SK-N-SH (cell line): ENCODE measurements at regions of chr16 and their contacts with region 1.

Region 1: GRCh38 chr16:84952335-84953189 is 58.8 kb downstream of the ZDHHC7 start:
- DNase-seq: peak; percentile 85
- H3K4me3 ChIP-seq: peak overlapping the region in 1 of 2 experiments; percentile 32; a peak in 1 of 4 replicates
- H3K27ac ChIP-seq: peak overlapping the region; percentile 22 to 84; a peak in 3 of 4 replicates
- H3K4me1 ChIP-seq: peaks cover 4 to 14% of the 10 kb centered on the region in 2 experiments; a peak in 2 of 4 replicates
- H3K27me3 ChIP-seq: no peaks in the 10 kb centered on the region
- CTCF ChIP-seq: peak; percentile 88
- EP300 ChIP-seq: peak in 1 of 2 experiments; percentile 71; a peak in 2 of 4 replicates
- RAD21 ChIP-seq: peak; percentile 82

Region 2: DNA sequence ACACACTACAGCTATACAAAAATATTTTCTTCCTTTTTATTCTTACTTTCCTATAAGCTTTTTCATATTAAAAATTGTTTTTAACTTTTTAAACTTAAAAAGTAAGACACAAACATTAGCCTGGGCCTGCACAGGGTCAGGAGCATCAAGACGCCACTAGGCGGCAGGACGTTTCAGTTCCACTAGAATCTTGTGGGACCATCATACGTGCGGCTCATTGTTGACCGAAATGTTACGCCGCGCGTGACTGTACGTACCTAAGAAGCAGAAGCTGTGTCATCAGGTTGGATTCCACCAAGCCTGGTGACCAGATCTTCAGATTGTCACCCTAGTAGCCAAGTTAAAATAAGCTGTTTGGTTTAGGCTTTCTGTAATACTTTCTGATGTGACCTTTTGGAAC is 205.7 kb before region 1 on chr16:
- CTCF ChIA-PET with region 1: interaction called, 179 read pairs
- POLR2A ChIA-PET with region 1: no interaction called
- DNase-seq: no peak
- H3K4me3 ChIP-seq: no peak overlapping the region; a peak in 1 of 4 replicates
- H3K27ac ChIP-seq: no peak overlapping the region
- H3K4me1 ChIP-seq: peaks cover 0 to 4% of the 10 kb centered on the region in 2 experiments; a peak in 2 of 4 replicates
- H3K27me3 ChIP-seq: no peaks in the 10 kb centered on the region
- CTCF ChIP-seq: peak; percentile 49
- EP300 ChIP-seq: no peak
- RAD21 ChIP-seq: no peak

Region 3: GRCh38 chr16:84765616-84766580 is 186.7 kb before region 1 on chr16:
- CTCF ChIA-PET with region 1: interaction called, 179 read pairs
- POLR2A ChIA-PET with region 1: interaction called, 7 read pairs
- DNase-seq: no peak
- H3K4me3 ChIP-seq: no peak overlapping the region
- H3K27ac ChIP-seq: no peak overlapping the region
- H3K4me1 ChIP-seq: peaks cover 0 to 13% of the 10 kb centered on the region in 2 experiments; a peak in 2 of 4 replicates
- H3K27me3 ChIP-seq: no peaks in the 10 kb centered on the region
- CTCF ChIP-seq: no peak
- EP300 ChIP-seq: no peak
- RAD21 ChIP-seq: no peak

Region 4: GRCh38 chr16:84785843-84786581 is 166.6 kb before region 1 on chr16:
- CTCF ChIA-PET with region 1: interaction called, 25 read pairs
- POLR2A ChIA-PET with region 1: no interaction called
- DNase-seq: peak; percentile 79
- H3K4me3 ChIP-seq: no peak overlapping the region
- H3K27ac ChIP-seq: peak overlapping the region in 1 of 2 experiments; percentile 63; a peak in 2 of 4 replicates
- H3K4me1 ChIP-seq: peaks cover 6 to 41% of the 10 kb centered on the region in 2 experiments; a peak in 3 of 4 replicates
- H3K27me3 ChIP-seq: no peaks in the 10 kb centered on the region
- CTCF ChIP-seq: no peak
- EP300 ChIP-seq: peak; percentile 13 to 36; a peak in 1 of 4 replicates
- RAD21 ChIP-seq: peak; percentile 12; the same call in 1 of the 2 replicates

Region 5: GRCh38 chr16:84925092-84925772 is 27.3 kb before region 1 on chr16:
- CTCF ChIA-PET with region 1: interaction called, 32 read pairs
- POLR2A ChIA-PET with region 1: no interaction called
- DNase-seq: peak; percentile 56
- H3K4me3 ChIP-seq: no peak overlapping the region; a peak in 1 of 4 replicates
- H3K27ac ChIP-seq: no peak overlapping the region
- H3K4me1 ChIP-seq: peaks cover 0 to 20% of the 10 kb centered on the region in 2 experiments; a peak in 1 of 4 replicates
- H3K27me3 ChIP-seq: no peaks in the 10 kb centered on the region
- CTCF ChIP-seq: peak; percentile 73
- EP300 ChIP-seq: no peak
- RAD21 ChIP-seq: peak; percentile 56

Region 6: DNA sequence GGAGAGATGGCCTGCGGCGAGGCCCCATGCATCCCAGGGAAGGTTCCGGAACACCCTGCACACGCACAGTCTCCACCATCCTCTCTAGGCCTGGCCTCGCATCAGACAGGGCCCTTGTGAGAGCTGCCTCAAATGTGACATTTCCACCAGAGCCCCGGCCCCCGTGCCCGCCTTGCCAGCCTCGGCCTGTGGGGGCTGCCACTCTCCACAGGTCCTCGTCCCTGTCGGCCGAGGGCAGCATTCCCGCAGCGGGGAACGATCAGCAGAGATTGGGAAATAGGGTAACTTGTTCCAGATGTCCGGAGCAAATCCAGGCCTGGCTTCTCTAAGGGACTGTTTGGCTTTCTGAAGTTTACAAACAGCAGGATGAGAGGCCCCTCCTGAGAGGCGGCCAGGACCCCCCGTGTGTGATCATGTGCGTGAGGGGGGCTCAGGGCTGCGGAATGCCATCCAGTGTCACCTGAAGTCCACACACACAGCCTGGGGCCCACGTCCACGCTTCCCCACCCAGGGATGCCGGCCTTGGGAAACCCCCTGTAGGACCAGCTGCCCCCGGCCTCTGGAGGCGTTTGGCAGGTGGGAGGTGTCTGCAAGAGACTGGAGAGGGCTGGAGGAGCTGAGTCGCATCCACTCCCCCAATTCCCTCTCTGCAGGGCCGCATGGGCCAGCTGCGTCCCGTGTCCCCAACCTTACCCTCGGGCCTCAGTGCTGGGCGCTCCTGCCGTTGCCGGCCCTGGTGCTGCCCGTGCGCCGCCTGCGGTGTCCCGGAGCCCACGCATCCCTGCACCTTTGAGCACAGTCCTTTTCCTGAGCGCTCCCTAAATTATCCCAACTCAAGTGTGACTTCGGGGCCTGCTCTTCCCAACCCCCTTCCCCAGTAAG is 11.7 kb before region 1 on chr16:
- CTCF ChIA-PET with region 1: interaction called, 45 read pairs
- POLR2A ChIA-PET with region 1: no interaction called
- DNase-seq: peak; percentile 93
- H3K4me3 ChIP-seq: no peak overlapping the region
- H3K27ac ChIP-seq: no peak overlapping the region
- H3K4me1 ChIP-seq: peaks cover 0 to 11% of the 10 kb centered on the region in 2 experiments; a peak in 1 of 4 replicates
- H3K27me3 ChIP-seq: no peaks in the 10 kb centered on the region
- CTCF ChIP-seq: no peak
- EP300 ChIP-seq: 0 out of 4 replicates have a peak, but pooled peaks of 1 of the 2 experiments have one; percentile 18
- RAD21 ChIP-seq: peak; percentile 45; the same call in 1 of the 2 replicates